Activated CD8-positive, alpha-beta memory T cell treated with anti-CD3 and anti-CD28 coated beads, Interleukin-2, amount 10 ng/mL, durations not matched to agents 7 days and 5 days (primary cell): ENCODE measurements at regions of chr1 and their contacts with region 1.

Region 1: GRCh38 chr1:24385160-24385940 is 28.2 kb downstream of the STPG1 start:
- DNase-seq: peak; percentile 64
- ATAC-seq: peak; percentile 52
- H3K4me3 Mint-ChIP-seq: no peak overlapping the region
- H3K27ac Mint-ChIP-seq: peak overlapping the region; percentile 17
- H3K4me1 Mint-ChIP-seq: peaks cover 35% of the 10 kb centered on the region
- H3K27me3 Mint-ChIP-seq: no peaks in the 10 kb centered on the region

Region 2: GRCh38 chr1:24186993-24187805 is 198.2 kb before region 1 on chr1 and contains the start of gene IFNLR1:
- CTCF ChIA-PET with region 1: interaction called, 509 read pairs
- DNase-seq: peak; percentile 85
- ATAC-seq: peak; percentile 81
- H3K4me3 Mint-ChIP-seq: peak within 1 kb of the TSS; percentile 72
- H3K27ac Mint-ChIP-seq: peak within 1 kb of the TSS; percentile 65
- H3K4me1 Mint-ChIP-seq: peaks cover 49% of the 10 kb centered on the region
- H3K27me3 Mint-ChIP-seq: no peaks in the 10 kb centered on the region
- total RNA-seq, gene IFNLR1: 6.8 to 6.9 TPM

Region 3: GRCh38 chr1:24321697-24322469 is 63.5 kb before region 1 on chr1:
- CTCF ChIA-PET with region 1: interaction called, 35 read pairs
- DNase-seq: peak; percentile 84
- ATAC-seq: peak; percentile 69
- H3K4me3 Mint-ChIP-seq: peak overlapping the region; percentile 53
- H3K27ac Mint-ChIP-seq: peak overlapping the region; percentile 72
- H3K4me1 Mint-ChIP-seq: peaks cover 44% of the 10 kb centered on the region
- H3K27me3 Mint-ChIP-seq: peaks cover 94% of the 10 kb centered on the region

Region 4: DNA sequence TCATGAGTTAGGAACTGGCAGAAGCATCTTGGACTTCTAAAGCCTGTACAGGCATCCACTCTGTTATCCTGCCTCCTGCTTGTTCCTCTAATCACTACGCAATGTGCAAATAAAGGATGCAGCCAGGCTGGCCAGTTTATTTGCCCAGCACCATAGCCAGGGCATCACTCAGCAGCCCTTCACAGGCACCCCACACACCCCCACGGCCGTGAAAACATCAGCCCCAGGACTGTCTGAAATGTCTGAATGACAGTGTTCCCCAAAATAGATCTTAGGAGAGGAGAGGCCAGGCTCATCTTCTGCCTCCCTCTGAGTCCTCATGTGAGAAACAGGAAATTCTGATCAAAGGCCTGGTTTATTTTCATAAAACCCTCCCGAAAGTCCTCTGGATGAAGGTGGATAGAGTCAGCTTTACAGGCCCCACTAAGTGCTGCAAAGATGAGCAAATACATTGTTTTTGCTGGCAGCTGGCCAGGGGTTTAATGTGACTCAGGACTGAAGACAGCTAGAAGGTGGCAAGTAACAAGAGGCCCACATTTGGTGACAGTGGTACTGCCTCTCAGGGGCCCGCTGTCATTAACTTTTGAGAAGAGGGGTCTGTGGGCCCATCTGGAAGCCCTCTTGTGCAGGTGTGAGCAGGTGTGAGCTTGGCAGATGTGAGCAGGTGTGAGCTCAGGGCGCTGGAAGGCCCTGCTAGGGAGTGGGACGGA is 33.3 kb before region 1 on chr1:
- CTCF ChIA-PET with region 1: interaction called, 10 read pairs
- DNase-seq: peak; percentile 62
- ATAC-seq: peak; percentile 25
- H3K4me3 Mint-ChIP-seq: no peak overlapping the region
- H3K27ac Mint-ChIP-seq: peak overlapping the region; percentile 47
- H3K4me1 Mint-ChIP-seq: peaks cover 34% of the 10 kb centered on the region
- H3K27me3 Mint-ChIP-seq: peaks cover 4% of the 10 kb centered on the region

Region 5: GRCh38 chr1:24373044-24373443 is 12.3 kb before region 1 on chr1:
- CTCF ChIA-PET with region 1: interaction called, 12 read pairs
- DNase-seq: no peak
- ATAC-seq: peak; percentile 53
- H3K4me3 Mint-ChIP-seq: no peak overlapping the region
- H3K27ac Mint-ChIP-seq: no peak overlapping the region
- H3K4me1 Mint-ChIP-seq: peaks cover 3% of the 10 kb centered on the region
- H3K27me3 Mint-ChIP-seq: no peaks in the 10 kb centered on the region

Region 6: GRCh38 chr1:24502709-24503058 is 117.3 kb after region 1 on chr1 and contains the start of gene RCAN3:
- CTCF ChIA-PET with region 1: no interaction called
- DNase-seq: peak; percentile 95
- ATAC-seq: peak; percentile 87
- H3K4me3 Mint-ChIP-seq: peak within 1 kb of the TSS; percentile 95
- H3K27ac Mint-ChIP-seq: peak within 1 kb of the TSS; percentile 96
- H3K4me1 Mint-ChIP-seq: peaks cover 73% of the 10 kb centered on the region
- H3K27me3 Mint-ChIP-seq: no peaks in the 10 kb centered on the region
- total RNA-seq, gene RCAN3: 23.9 to 30.6 TPM